A673 (cell line): ENCODE measurements at regions of chr2 and their contacts with region 1.

Region 1: GRCh38 chr2:16625201-16625729 is 40.4 kb downstream of the CYRIA start:
- DNase-seq: peak; percentile 97
- H3K4me3 ChIP-seq: no peak overlapping the region
- H3K27ac ChIP-seq: peak overlapping the region; percentile 94
- H3K4me1 ChIP-seq: peaks cover 86% of the 10 kb centered on the region
- H3K27me3 ChIP-seq: no peaks in the 10 kb centered on the region
- CTCF ChIP-seq: 0 out of 2 replicates have a peak, but pooled peaks have one; percentile 17

Region 2: GRCh38 chr2:16330571-16330970 is 294.7 kb before region 1 on chr2:
- CTCF ChIA-PET with region 1: no interaction called
- POLR2A ChIA-PET with region 1: no interaction called
- intact Hi-C with region 1: no loop called
- DNase-seq: no peak
- H3K4me3 ChIP-seq: no peak overlapping the region
- H3K27ac ChIP-seq: no peak overlapping the region
- H3K4me1 ChIP-seq: no peaks in the 10 kb centered on the region
- H3K27me3 ChIP-seq: no peaks in the 10 kb centered on the region
- CTCF ChIP-seq: no peak

Region 3: DNA sequence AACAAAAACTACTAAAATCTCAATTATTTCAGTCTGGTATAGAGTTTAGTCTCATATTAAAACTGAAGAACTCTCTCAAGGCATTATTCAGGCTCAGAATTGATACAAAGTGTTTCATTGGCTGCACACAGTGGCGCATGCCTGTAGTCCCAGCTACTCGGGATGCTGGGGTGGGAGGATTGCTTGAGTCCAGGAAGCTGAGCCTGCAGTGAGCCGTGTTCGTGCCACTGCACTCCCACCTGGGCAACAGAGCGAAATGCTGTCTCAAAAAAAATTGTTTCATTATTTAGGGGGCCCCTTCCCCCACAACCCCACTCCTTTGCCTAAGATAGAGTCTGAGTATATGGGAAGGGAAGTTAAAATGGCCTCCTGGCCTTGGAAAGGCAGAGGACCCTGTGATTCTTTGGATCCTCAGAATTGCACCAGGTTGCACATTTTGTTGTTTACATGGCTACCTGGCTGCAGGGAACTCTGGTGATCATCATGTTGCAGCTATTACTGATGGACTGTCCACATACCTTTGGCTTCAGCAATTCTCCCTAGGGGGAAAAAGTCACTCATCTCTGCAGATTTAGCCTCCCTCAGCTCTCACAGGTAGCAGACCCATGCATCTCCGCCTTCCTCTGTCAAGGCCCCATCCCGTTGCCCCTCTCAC is 59.5 kb after region 1 on chr2:
- CTCF ChIA-PET with region 1: no interaction called
- POLR2A ChIA-PET with region 1: no interaction called
- intact Hi-C with region 1: loop called (anchors 2 kb)
- DNase-seq: peak; percentile 79
- H3K4me3 ChIP-seq: peak overlapping the region; percentile 8
- H3K27ac ChIP-seq: peak overlapping the region; percentile 100
- H3K4me1 ChIP-seq: peaks cover 67% of the 10 kb centered on the region
- H3K27me3 ChIP-seq: no peaks in the 10 kb centered on the region
- CTCF ChIP-seq: no peak